Endothelial cell of umbilical vein (primary cell): ENCODE measurements at regions of chr4 and their contacts with region 1.

Region 1: GRCh38 chr4:78569291-78569821 is 17.8 kb downstream of the ANXA3 start:
- DNase-seq: peak; percentile 80
- H3K4me3 ChIP-seq: peak overlapping the region in 1 of 3 experiments; percentile 44
- H3K27ac ChIP-seq: peak overlapping the region; percentile 81
- H3K4me1 ChIP-seq: peaks cover 30% of the 10 kb centered on the region
- H3K27me3 ChIP-seq: no peaks in the 10 kb centered on the region
- CTCF ChIP-seq: no peak
- POLR2A ChIP-seq: no peak

Region 2: DNA sequence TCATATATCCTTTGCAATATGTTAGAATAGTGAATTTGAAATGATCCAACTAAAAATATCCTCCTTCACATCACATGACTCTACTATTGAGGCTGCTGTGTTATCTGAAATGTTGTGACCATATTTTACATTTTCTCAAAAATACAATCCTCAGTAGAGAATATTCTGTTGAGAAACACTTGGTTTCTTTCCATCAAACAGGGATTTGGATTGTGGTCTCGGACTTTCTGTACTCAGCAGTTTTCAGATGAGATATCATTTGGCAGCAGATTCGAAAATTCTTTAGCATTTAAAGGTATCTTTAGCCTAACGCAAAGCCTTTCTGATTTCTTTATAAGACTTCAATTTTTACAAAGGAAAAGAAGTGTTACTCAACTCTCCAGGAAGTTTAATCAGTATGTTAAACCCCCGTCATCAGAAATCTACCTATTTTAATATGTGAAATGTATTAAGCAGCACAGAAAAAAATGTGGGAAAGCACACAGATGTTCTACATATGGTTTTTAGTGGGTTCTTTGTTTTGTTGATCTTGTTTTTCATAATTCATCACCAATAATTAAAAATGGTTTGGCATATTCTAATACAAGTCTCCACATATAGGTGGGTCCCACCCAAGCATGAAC is 73.2 kb before region 1 on chr4:
- CTCF ChIA-PET with region 1: no interaction called
- POLR2A ChIA-PET with region 1: no interaction called
- dilution Hi-C with region 1: no loop called
- intact Hi-C with region 1: no loop called
- DNase-seq: no peak
- H3K4me3 ChIP-seq: no peak overlapping the region
- H3K27ac ChIP-seq: no peak overlapping the region
- H3K4me1 ChIP-seq: no peaks in the 10 kb centered on the region
- H3K27me3 ChIP-seq: no peaks in the 10 kb centered on the region
- CTCF ChIP-seq: no peak
- POLR2A ChIP-seq: no peak

Region 3: DNA sequence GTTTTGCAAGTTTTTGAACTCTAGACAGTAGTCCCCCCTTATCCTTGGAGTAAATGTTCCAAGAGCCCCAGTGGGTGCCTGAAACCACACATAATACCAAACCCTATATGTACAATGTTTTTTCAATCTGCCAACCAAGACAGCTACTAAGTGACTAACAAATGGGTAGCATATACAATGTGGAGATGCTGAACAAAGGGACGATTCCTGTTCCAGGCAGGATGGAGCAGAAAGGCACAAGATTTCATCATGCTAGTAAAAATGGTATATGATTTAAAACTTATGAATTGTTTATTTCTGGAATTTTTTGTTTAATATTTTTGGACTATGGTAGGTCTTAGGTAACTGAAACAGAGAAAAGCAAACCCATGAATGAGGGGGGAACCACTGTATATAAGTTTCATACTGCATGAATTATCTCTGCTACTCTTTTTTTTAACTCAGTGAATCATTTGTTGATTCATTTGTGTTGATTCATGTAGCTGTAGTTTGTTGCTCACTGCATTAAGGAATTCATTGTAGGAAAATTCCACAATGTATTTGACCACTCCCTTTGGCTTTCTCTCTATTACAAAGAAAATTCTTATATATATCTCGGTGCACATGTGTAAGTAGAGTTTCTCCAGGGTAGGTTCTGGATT is 39.7 kb before region 1 on chr4:
- CTCF ChIA-PET with region 1: no interaction called
- POLR2A ChIA-PET with region 1: no interaction called
- dilution Hi-C with region 1: no loop called
- intact Hi-C with region 1: loop called (anchors 2 kb)
- DNase-seq: no peak
- H3K4me3 ChIP-seq: no peak overlapping the region
- H3K27ac ChIP-seq: no peak overlapping the region
- H3K4me1 ChIP-seq: peaks cover 26% of the 10 kb centered on the region
- H3K27me3 ChIP-seq: no peaks in the 10 kb centered on the region
- CTCF ChIP-seq: no peak
- POLR2A ChIP-seq: no peak

Region 4: GRCh38 chr4:78601013-78601412 is 31.7 kb after region 1 on chr4:
- CTCF ChIA-PET with region 1: interaction called, 3 read pairs
- POLR2A ChIA-PET with region 1: interaction called, 4 read pairs
- dilution Hi-C with region 1: no loop called
- intact Hi-C with region 1: loop called (anchors 2 kb)
- DNase-seq: no peak
- H3K4me3 ChIP-seq: no peak overlapping the region
- H3K27ac ChIP-seq: no peak overlapping the region
- H3K4me1 ChIP-seq: peaks cover 4% of the 10 kb centered on the region
- H3K27me3 ChIP-seq: no peaks in the 10 kb centered on the region
- CTCF ChIP-seq: no peak
- POLR2A ChIP-seq: no peak

Region 5: DNA sequence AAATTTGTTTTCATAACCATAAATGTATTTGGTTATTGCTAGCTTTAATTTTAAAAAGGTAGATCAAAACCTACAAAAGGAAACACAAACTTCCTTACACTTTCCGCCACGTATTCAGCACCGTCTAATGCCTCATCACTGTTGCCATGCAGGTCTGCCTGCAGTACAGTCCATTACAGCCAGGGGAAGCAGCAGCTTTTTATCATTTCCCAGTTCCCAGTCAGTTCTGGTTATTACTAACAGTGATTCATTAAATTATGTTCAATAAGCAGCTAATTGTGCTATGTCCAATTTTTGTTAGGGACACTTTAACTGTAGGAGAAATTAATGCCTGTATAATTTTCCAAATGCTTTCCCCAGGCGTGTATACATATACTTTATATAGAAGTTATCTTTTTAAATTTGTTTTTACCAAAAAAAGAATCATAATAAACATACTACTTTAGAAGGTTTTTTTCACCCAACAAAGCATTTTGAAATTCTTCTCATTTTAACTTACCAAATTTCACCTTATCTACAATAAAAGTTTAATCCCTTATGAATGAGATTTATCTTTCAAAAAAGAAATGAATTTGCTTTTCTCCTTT is 75.5 kb after region 1 on chr4:
- CTCF ChIA-PET with region 1: no interaction called
- POLR2A ChIA-PET with region 1: no interaction called
- dilution Hi-C with region 1: no loop called
- intact Hi-C with region 1: no loop called
- DNase-seq: peak; percentile 90
- H3K4me3 ChIP-seq: peak overlapping the region in 1 of 3 experiments; percentile 61
- H3K27ac ChIP-seq: peak overlapping the region; percentile 92
- H3K4me1 ChIP-seq: peaks cover 41% of the 10 kb centered on the region
- H3K27me3 ChIP-seq: no peaks in the 10 kb centered on the region
- CTCF ChIP-seq: peak; percentile 79 to 86
- POLR2A ChIP-seq: no peak

Region 6: GRCh38 chr4:78799551-78800495 is 230.5 kb after region 1 on chr4:
- CTCF ChIA-PET with region 1: no interaction called
- POLR2A ChIA-PET with region 1: no interaction called
- dilution Hi-C with region 1: no loop called
- intact Hi-C with region 1: no loop called
- DNase-seq: no peak
- H3K4me3 ChIP-seq: no peak overlapping the region
- H3K27ac ChIP-seq: no peak overlapping the region
- H3K4me1 ChIP-seq: no peaks in the 10 kb centered on the region
- H3K27me3 ChIP-seq: no peaks in the 10 kb centered on the region
- CTCF ChIP-seq: no peak
- POLR2A ChIP-seq: no peak

Region 7: GRCh38 chr4:79042079-79042674 is 472.8 kb after region 1 on chr4:
- CTCF ChIA-PET with region 1: no interaction called
- POLR2A ChIA-PET with region 1: no interaction called
- dilution Hi-C with region 1: no loop called
- intact Hi-C with region 1: no loop called
- DNase-seq: peak; percentile 32
- H3K4me3 ChIP-seq: no peak overlapping the region
- H3K27ac ChIP-seq: no peak overlapping the region
- H3K4me1 ChIP-seq: no peaks in the 10 kb centered on the region
- H3K27me3 ChIP-seq: no peaks in the 10 kb centered on the region
- CTCF ChIP-seq: peak; percentile 11 to 15
- POLR2A ChIP-seq: no peak